ENCODE measurements at regions of chr22 and their contacts with region 1.

Region 1: DNA sequence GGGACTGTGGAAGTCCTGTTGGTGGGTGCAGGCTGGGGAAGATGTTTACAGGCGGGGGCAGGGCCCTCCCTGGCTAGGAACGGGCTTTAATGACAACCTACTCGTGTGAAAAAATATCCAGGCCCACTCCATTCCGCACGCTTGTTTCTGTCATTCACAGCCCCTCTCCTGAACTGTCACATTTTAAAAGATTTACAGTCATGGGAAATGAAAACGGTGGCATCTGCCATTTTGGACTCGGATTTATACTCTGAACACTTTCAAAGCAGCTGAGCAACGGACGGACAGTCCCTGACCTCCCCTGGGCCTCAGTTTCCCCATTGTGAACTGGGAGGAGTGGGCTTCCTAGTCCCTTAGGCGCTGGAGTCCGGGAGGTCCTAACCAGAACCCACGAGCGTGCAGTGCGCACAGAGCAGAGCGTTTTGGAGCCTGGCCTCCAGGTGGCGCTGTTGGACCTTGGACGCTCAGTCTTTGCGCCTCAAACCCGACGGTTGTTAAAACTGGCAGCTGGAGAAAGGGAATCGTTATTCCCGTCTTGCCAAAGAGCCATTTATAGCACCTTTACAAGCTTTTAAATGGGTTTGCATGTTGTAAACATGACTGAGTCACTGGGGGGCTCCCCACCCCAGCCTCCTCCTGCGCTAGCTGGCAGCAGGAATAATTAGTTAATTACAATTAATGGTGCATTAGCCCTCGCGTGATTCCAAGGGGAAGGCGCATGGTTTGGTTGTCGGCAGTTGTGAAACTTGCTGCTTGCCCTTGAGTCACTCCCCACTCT is 75.3 kb downstream of the FBLN1 start:
- DNase-seq: peak; percentile 59 to 81 (median 69)
- ATAC-seq: peak; percentile 93
- H3K4me3 ChIP-seq: no peak overlapping the region
- H3K27ac ChIP-seq: no peak overlapping the region
- H3K4me1 ChIP-seq: peaks cover 0 to 9% of the 10 kb centered on the region in 2 experiments; a peak in 2 of 5 replicates
- H3K27me3 ChIP-seq: peaks cover 5 to 65% of the 10 kb centered on the region in 2 experiments; a peak in 4 of 5 replicates
- CTCF ChIP-seq: peak; percentile 82 to 85 (median 84)
- EP300 ChIP-seq: no peak
- POLR2A ChIP-seq: no peak
- RAD21 ChIP-seq: peak; percentile 72 to 89

Region 2: GRCh38 chr22:45640291-45640940 is 62.5 kb after region 1 on chr22:
- CTCF ChIA-PET with region 1: interaction called, 3 read pairs
- POLR2A ChIA-PET with region 1: no interaction called
- in situ Hi-C with region 1: loop called (anchors 5 kb)
- intact Hi-C with region 1: loop called (anchors 5 kb)
- DNase-seq: no peak
- ATAC-seq: no peak
- H3K4me3 ChIP-seq: no peak overlapping the region
- H3K27ac ChIP-seq: no peak overlapping the region
- H3K4me1 ChIP-seq: peaks cover 13 to 23% of the 10 kb centered on the region in 2 experiments
- H3K27me3 ChIP-seq: peaks cover 0 to 27% of the 10 kb centered on the region in 2 experiments; a peak in 2 of 5 replicates
- CTCF ChIP-seq: no peak
- EP300 ChIP-seq: no peak
- POLR2A ChIP-seq: no peak
- RAD21 ChIP-seq: no peak

Region 3: DNA sequence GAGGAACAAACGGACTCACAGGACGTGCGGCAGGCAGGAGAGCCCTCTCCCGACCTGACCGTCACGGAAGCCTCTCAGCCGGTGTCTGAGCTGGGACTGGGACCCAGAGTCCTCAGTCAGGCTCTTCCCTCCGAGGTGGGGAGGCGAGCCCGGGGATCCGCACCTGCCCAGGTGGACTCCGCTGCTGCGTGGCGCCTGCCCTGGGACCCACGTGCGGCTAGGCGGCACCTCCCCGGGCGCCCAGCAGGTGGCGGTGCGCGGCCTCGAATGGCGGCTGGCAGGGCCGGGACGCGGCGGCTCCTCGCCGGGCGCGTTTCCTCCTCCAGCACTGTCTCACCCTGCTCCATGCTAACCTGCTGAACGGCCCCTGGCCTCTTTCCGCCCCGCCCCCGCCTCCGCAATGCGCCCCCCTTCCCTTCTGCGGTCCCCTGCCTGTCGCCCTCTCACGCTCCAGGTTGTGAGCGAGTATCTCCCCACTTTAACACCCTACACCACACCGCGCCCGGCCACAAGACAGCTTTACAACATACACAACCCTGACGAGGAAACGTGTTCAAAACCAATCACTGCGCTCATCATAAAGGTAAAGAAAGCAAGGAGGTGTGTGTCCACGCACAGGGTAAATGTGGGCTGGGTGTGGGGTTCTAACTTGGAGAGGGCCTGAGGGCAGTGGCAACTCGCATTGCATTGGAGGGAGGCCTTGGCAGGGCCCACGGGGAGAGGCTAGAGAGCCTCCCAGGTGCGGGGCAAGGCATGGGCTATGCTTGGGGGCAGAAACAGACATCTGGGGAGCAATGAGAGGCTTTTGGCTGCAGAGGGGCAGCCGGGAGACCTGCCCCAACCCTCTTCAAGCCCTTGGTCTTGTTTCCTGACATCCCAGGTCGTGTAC is 67.8 kb after region 1 on chr22:
- CTCF ChIA-PET with region 1: interaction called, 4 read pairs
- POLR2A ChIA-PET with region 1: no interaction called
- in situ Hi-C with region 1: loop called (anchors 5 kb)
- intact Hi-C with region 1: loop called (anchors 5 kb)
- DNase-seq: peak; percentile 69 to 78 (median 74)
- ATAC-seq: peak; percentile 99
- H3K4me3 ChIP-seq: no peak overlapping the region
- H3K27ac ChIP-seq: no peak overlapping the region
- H3K4me1 ChIP-seq: peaks cover 0 to 23% of the 10 kb centered on the region in 2 experiments; a peak in 3 of 5 replicates
- H3K27me3 ChIP-seq: peaks cover 0 to 48% of the 10 kb centered on the region in 2 experiments
- CTCF ChIP-seq: peak; percentile 65 to 83 (median 69)
- EP300 ChIP-seq: no peak
- POLR2A ChIP-seq: no peak
- RAD21 ChIP-seq: peak; percentile 61 to 85

Region 4: DNA sequence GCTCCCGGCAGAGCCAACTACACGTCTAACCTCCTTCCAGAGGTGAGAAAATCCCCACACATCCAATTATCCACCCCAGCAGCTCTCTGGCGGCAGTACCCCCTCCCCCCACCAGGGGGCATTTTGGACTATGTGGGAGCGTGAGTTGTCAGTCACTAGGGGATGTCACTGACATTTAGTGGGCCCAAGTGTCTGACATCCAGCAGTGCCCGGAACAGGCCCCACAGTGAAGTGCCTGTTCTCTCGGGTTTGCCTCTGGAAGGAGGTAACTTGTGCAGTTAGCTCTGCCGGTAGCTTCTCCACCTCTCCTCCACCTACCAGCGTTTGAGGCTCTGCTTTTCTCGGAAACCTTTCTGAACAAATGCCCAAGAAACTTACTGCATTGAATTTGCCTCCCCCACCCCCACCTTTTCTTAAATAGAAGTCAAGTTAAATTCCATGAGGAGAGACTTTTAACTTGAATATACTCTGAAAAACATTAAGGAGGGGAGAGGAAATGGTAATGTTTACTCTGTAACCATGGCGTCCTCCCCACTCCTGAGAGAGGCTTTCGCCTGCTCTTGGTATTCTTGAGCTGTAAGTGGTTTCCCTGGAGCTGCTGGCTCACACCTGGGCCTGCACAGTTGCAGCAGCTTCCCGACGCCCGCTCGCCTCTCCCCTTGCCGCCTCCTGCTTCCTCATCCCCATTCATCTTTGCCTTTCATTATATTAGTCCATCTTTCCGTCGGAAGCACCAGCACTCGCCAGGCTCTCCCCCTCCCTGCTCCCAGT is 286.2 kb after region 1 on chr22:
- CTCF ChIA-PET with region 1: no interaction called
- POLR2A ChIA-PET with region 1: no interaction called
- in situ Hi-C with region 1: no loop called
- intact Hi-C with region 1: loop called (anchors 5 kb)
- DNase-seq: peak; percentile 66 to 75 (median 70)
- ATAC-seq: peak; percentile 85
- H3K4me3 ChIP-seq: no peak overlapping the region
- H3K27ac ChIP-seq: no peak overlapping the region
- H3K4me1 ChIP-seq: peaks cover 0 to 8% of the 10 kb centered on the region in 2 experiments; a peak in 2 of 5 replicates
- H3K27me3 ChIP-seq: peaks cover 0 to 33% of the 10 kb centered on the region in 2 experiments; a peak in 3 of 5 replicates
- CTCF ChIP-seq: peak; percentile 75 to 86 (median 84)
- EP300 ChIP-seq: no peak
- POLR2A ChIP-seq: no peak
- RAD21 ChIP-seq: peak in 1 of 2 experiments; percentile 62; a peak in 2 of 4 replicates

Region 5: DNA sequence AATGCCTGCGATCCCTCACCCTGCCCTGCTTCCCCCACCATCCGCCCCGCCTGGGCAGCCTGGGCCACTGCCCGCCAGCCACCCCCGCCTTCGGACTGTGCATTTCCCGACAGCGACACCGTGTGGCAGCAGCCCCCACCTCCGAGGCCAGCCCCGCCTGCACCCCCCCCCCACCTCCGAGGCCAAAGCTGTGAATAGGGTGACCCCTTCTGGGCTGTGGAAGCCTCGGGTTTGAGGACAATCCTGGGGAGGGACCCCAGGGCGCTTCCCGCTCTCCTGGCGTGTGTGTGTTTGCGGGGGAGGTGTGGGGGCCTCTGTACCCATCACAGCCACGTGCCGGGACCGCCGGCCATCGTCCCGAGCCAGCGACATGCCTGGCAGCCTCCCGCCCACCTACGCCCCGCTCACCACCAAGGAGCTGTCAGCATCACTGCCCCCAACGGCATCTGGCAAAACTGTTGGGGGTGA is 538.6 kb after region 1 on chr22:
- CTCF ChIA-PET with region 1: interaction called, 11 read pairs
- POLR2A ChIA-PET with region 1: no interaction called
- in situ Hi-C with region 1: loop called (anchors 5 kb)
- intact Hi-C with region 1: loop called (anchors 10 kb)
- DNase-seq: peak; percentile 84 to 94 (median 94)
- ATAC-seq: peak; percentile 89
- H3K4me3 ChIP-seq: no peak overlapping the region
- H3K27ac ChIP-seq: no peak overlapping the region
- H3K4me1 ChIP-seq: peaks cover 0 to 61% of the 10 kb centered on the region in 2 experiments; a peak in 3 of 5 replicates
- H3K27me3 ChIP-seq: no peaks in the 10 kb centered on the region
- CTCF ChIP-seq: peak; percentile 60 to 99 (median 89); a peak in 5 of 6 replicates
- EP300 ChIP-seq: no peak
- POLR2A ChIP-seq: no peak
- RAD21 ChIP-seq: peak; percentile 80 to 82

Measured in K562 (cell line).